ENCODE measurements at regions of chr15 and their contacts with region 1.

Region 1: GRCh38 chr15:25739687-25740121 is 123.4 kb downstream of the ATP10A start:
- DNase-seq: peak; percentile 12
- ATAC-seq: peak; percentile 88
- H3K4me3 ChIP-seq: no peak overlapping the region
- H3K27ac ChIP-seq: no peak overlapping the region
- H3K4me1 ChIP-seq: no peaks in the 10 kb centered on the region
- H3K27me3 ChIP-seq: no peaks in the 10 kb centered on the region
- CTCF ChIP-seq: peak; percentile 11 to 59 (median 21); a peak in 4 of 6 replicates
- EP300 ChIP-seq: no peak
- POLR2A ChIP-seq: no peak
- RAD21 ChIP-seq: peak; percentile 35; the same call in 1 of the 2 replicates

Region 2: GRCh38 chr15:25176991-25177954 is 562.4 kb before region 1 on chr15:
- CTCF ChIA-PET with region 1: no interaction called
- POLR2A ChIA-PET with region 1: no interaction called
- RAD21 ChIA-PET with region 1: no interaction called
- SMC1A ChIA-PET with region 1: no interaction called
- in situ Hi-C with region 1: loop called (anchors 25 kb)
- intact Hi-C with region 1: no loop called
- DNase-seq: no peak
- ATAC-seq: no peak
- H3K4me3 ChIP-seq: no peak overlapping the region
- H3K27ac ChIP-seq: no peak overlapping the region
- H3K4me1 ChIP-seq: no peaks in the 10 kb centered on the region
- H3K27me3 ChIP-seq: no peaks in the 10 kb centered on the region
- CTCF ChIP-seq: no peak
- EP300 ChIP-seq: no peak
- POLR2A ChIP-seq: no peak
- RAD21 ChIP-seq: no peak

Region 3: GRCh38 chr15:25568751-25569150 is 171.0 kb before region 1 on chr15:
- CTCF ChIA-PET with region 1: no interaction called
- POLR2A ChIA-PET with region 1: no interaction called
- RAD21 ChIA-PET with region 1: no interaction called
- SMC1A ChIA-PET with region 1: no interaction called
- in situ Hi-C with region 1: loop called (anchors 25 kb)
- intact Hi-C with region 1: no loop called
- DNase-seq: no peak
- ATAC-seq: no peak
- H3K4me3 ChIP-seq: no peak overlapping the region
- H3K27ac ChIP-seq: no peak overlapping the region
- H3K4me1 ChIP-seq: no peaks in the 10 kb centered on the region
- H3K27me3 ChIP-seq: no peaks in the 10 kb centered on the region
- CTCF ChIP-seq: no peak
- EP300 ChIP-seq: no peak
- POLR2A ChIP-seq: no peak
- RAD21 ChIP-seq: no peak

Region 4: GRCh38 chr15:25670025-25670554 is 69.6 kb before region 1 on chr15:
- CTCF ChIA-PET with region 1: no interaction called
- POLR2A ChIA-PET with region 1: no interaction called
- RAD21 ChIA-PET with region 1: no interaction called
- SMC1A ChIA-PET with region 1: no interaction called
- in situ Hi-C with region 1: loop called (anchors 10 kb)
- intact Hi-C with region 1: no loop called
- DNase-seq: no peak
- ATAC-seq: no peak
- H3K4me3 ChIP-seq: no peak overlapping the region
- H3K27ac ChIP-seq: no peak overlapping the region
- H3K4me1 ChIP-seq: no peaks in the 10 kb centered on the region
- H3K27me3 ChIP-seq: no peaks in the 10 kb centered on the region
- CTCF ChIP-seq: no peak
- EP300 ChIP-seq: no peak
- POLR2A ChIP-seq: no peak
- RAD21 ChIP-seq: no peak

Region 5: DNA sequence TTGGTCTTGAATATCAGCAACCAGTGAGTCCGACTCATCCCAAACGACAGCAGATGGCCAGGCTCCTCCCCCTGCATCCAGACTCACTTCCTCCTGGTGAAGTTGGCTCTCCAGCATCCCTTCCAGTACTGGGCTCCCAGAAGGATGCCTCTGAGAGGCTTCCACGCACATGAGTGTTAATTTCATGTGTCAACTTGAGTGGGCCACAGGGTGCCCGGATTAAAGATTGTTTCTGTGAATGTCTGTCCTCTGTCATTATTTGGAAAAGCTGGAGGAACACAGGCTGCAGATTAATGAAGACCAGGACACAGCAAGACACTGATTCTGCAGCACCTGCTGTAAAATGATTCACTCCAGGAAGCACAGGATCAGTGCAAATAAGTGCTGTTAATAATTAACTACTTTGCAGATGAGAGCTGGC is 23.6 kb after region 1 on chr15:
- CTCF ChIA-PET with region 1: no interaction called
- POLR2A ChIA-PET with region 1: no interaction called
- RAD21 ChIA-PET with region 1: no interaction called
- SMC1A ChIA-PET with region 1: no interaction called
- in situ Hi-C with region 1: no loop called
- intact Hi-C with region 1: loop called (anchors 2 kb)
- DNase-seq: no peak
- ATAC-seq: no peak
- H3K4me3 ChIP-seq: no peak overlapping the region
- H3K27ac ChIP-seq: no peak overlapping the region
- H3K4me1 ChIP-seq: no peaks in the 10 kb centered on the region
- H3K27me3 ChIP-seq: no peaks in the 10 kb centered on the region
- CTCF ChIP-seq: no peak
- EP300 ChIP-seq: no peak
- POLR2A ChIP-seq: no peak
- RAD21 ChIP-seq: no peak

Region 6: DNA sequence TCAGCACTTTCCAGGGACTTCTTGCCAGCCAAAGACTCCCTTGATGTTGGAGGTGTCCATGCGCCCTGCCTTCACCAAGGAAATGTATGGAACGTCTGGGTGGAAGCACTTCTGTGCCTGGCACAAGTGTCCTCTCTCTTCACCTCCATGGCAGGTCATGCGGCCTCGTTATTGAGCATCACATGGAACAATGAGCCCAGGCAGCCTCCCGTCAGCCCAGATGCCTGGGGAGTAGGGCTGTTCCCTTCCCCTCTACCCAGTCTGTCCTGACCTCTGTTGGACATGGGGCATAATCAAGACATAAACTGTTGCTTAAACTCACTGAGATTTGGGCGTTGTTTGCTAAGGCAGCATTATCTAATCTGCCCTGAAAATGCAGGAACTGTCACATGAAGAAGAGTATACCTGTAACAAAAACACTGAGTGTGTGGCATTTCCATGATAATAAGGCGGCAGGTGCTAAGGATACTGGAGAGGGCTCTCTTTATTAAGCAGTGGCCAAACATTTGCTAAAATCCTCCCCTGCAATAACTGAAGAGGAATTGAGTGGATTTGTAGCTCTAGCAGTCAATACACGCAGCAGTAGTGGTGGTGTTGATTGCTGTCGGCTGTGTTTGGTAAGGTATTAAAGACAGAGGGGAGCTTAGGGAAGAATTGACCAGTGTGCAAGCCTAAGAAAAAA is 461.6 kb after region 1 on chr15:
- CTCF ChIA-PET with region 1: no interaction called
- POLR2A ChIA-PET with region 1: no interaction called
- RAD21 ChIA-PET with region 1: no interaction called
- SMC1A ChIA-PET with region 1: no interaction called
- in situ Hi-C with region 1: loop called (anchors 25 kb)
- intact Hi-C with region 1: no loop called
- DNase-seq: no peak
- ATAC-seq: no peak
- H3K4me3 ChIP-seq: no peak overlapping the region
- H3K27ac ChIP-seq: no peak overlapping the region
- H3K4me1 ChIP-seq: no peaks in the 10 kb centered on the region
- H3K27me3 ChIP-seq: no peaks in the 10 kb centered on the region
- CTCF ChIP-seq: no peak
- EP300 ChIP-seq: no peak
- POLR2A ChIP-seq: no peak
- RAD21 ChIP-seq: no peak